ENCODE measurements at regions of chr6 and their contacts with region 1.

Region 1: GRCh38 chr6:7107578-7108195 is at the start of gene RREB1:
- DNase-seq: no peak
- H3K4me3 ChIP-seq: peak within 1 kb of the TSS; percentile 91
- H3K27me3 ChIP-seq: no peaks in the 10 kb centered on the region
- CTCF ChIP-seq: no peak
- polyA plus RNA-seq, gene RREB1: 1.2 and 1.5 TPM in 2 replicates

Region 2: GRCh38 chr6:7025861-7026260 is 81.8 kb before region 1 on chr6:
- CTCF ChIA-PET with region 1: no interaction called
- POLR2A ChIA-PET with region 1: no interaction called
- DNase-seq: no peak
- H3K4me3 ChIP-seq: no peak overlapping the region
- H3K27me3 ChIP-seq: no peaks in the 10 kb centered on the region
- CTCF ChIP-seq: no peak

Region 3: DNA sequence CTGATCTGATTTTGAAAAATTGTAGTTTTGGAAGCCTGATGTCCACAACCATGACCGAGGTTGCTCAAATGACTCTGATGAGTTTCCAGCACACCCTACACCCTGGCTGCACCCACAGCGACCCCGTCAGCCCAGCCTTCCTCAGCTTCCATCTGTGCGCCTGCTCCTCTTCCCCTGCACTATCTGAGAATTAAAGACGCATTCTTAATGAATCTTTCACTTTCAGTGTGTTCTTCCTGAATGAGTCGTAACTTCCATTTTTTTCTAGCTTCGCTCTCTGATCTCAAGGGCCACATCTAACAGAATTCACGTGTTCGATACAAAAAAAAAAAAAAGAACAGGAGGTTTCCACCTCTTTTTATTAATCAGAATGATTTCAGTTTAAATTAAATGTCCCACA is 21.2 kb before region 1 on chr6:
- CTCF ChIA-PET with region 1: interaction called, 8 read pairs
- POLR2A ChIA-PET with region 1: interaction called, 12 read pairs
- DNase-seq: no peak
- H3K4me3 ChIP-seq: peak overlapping the region; percentile 24
- H3K27me3 ChIP-seq: no peaks in the 10 kb centered on the region
- CTCF ChIP-seq: peak; percentile 18; the same call in 1 of the 2 replicates

Region 4: DNA sequence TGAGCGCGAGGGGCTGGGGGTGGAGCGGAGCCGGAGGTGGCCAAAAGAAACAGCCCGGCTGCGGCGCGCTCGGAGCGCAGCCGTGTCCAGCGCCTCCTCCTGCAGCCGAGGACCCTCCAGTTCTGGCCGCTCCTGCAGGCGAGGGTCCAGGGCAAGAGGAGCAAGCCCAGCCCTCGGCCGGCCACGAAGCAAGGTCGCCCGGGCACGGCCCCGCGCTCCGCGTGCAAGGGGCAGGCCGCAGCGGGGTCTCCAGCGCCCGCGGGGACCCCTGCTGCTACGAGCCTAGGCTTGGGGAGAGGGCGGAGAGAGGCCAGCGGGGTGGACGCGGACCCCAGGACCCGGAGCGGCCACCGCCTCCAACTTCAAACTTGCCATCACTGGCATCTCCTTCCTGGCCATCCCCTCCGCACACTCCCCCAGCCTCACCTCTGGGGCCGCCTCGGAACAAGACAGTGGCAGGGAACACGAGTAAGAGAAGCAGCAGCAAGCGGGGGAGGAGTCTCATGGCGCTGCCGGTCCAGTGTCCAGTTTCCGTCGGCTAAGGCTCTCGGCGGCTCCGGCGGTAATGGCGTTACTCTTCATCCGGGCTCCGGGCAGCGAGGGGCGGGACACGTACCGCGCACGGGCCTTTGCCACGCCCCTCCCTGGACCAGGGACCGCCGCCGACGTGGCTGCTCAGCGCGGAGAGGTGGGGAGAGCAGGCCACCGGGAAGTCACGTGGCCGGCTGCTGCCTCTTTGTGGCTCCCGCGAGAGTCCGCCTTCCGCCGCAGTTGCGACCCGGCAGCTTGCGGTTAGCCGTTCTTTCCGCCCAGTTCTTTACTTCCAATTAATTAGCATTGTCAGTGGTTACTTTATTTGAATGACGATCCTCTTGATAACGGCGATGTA is 205.2 kb after region 1 on chr6 and contains the start of gene SSR1:
- CTCF ChIA-PET with region 1: no interaction called
- POLR2A ChIA-PET with region 1: interaction called, 11 read pairs
- DNase-seq: peak; percentile 73
- H3K4me3 ChIP-seq: peak within 1 kb of the TSS; percentile 72
- H3K27me3 ChIP-seq: no peaks in the 10 kb centered on the region
- CTCF ChIP-seq: no peak
- polyA plus RNA-seq, gene SSR1: 173 and 215 TPM in 2 replicates